ENCODE measurements at regions of chr14 and their contacts with region 1.

Region 1: GRCh38 chr14:22231018-22231417 is 358.0 kb downstream of the DAD1 start:
- DNase-seq: no peak
- H3K4me3 ChIP-seq: no peak overlapping the region
- CTCF ChIP-seq: no peak

Region 2: GRCh38 chr14:22333422-22334276 is 102.6 kb after region 1 on chr14:
- in situ Hi-C with region 1: loop called (anchors 5 kb)
- DNase-seq: peak; percentile 55
- H3K4me3 ChIP-seq: no peak overlapping the region
- CTCF ChIP-seq: no peak

Measured in astrocyte of the cerebellum (primary cell).